MCF 10A (cell line): ENCODE measurements at regions of chr2 and their contacts with region 1.

Region 1: DNA sequence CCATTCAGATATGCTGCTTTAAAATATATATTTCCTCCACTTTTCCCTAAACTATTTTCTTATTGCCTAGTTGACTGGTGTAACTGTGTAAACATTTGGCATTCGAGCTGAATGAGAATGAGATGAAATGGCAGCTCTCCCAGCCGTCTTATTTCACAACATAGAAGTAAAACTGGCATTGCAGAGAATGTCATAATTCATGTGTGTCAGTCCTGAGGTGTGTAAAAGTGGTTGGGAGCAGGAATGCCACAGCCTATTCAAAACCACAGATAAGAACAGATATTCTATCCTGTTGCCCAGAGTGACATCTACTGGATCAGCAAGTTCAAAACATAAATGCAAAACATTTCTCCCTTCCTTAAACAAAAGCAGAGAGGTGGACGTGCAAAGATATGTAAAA is 565.5 kb upstream of the CHAC2 start:
- DNase-seq: peak; percentile 91
- H3K4me3 Mint-ChIP-seq: no peak overlapping the region
- H3K27ac Mint-ChIP-seq: peak overlapping the region; percentile 76
- H3K4me1 Mint-ChIP-seq: peaks cover 15% of the 10 kb centered on the region
- H3K27me3 Mint-ChIP-seq: no peaks in the 10 kb centered on the region
- CTCF ChIP-seq: peak; percentile 55

Region 2: DNA sequence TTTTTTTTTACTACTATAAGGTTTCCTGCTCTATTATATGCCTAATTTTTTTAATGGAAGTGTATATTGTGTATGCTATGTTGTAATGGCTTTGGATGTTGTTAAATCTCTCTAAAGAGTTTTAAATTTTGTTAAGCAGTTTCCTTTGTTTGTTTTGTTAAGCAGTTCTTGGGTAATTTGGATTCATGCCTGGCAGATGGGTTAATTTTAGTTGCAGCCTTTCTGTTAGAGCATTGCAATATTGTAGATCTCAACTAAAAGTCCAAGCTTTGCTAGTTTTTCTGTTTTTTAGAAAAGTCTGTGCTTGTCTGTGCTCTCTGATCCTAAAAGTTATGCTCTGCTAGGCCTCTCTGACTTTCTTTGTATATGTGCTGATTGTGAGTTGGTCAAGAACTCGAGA is 941.2 kb before region 1 on chr2:
- CTCF ChIA-PET with region 1: no interaction called
- POLR2A ChIA-PET with region 1: no interaction called
- intact Hi-C with region 1: no loop called
- DNase-seq: peak; percentile 70
- H3K4me3 Mint-ChIP-seq: no peak overlapping the region
- H3K27ac Mint-ChIP-seq: no peak overlapping the region
- H3K4me1 Mint-ChIP-seq: peaks cover 6% of the 10 kb centered on the region
- H3K27me3 Mint-ChIP-seq: no peaks in the 10 kb centered on the region
- CTCF ChIP-seq: no peak

Region 3: GRCh38 chr2:52810460-52810859 is 391.6 kb before region 1 on chr2:
- CTCF ChIA-PET with region 1: interaction called, 22 read pairs
- POLR2A ChIA-PET with region 1: no interaction called
- intact Hi-C with region 1: loop called (anchors 1 kb)
- DNase-seq: peak; percentile 44
- H3K4me3 Mint-ChIP-seq: no peak overlapping the region
- H3K27ac Mint-ChIP-seq: peak overlapping the region; percentile 59
- H3K4me1 Mint-ChIP-seq: peaks cover 11% of the 10 kb centered on the region
- H3K27me3 Mint-ChIP-seq: no peaks in the 10 kb centered on the region
- CTCF ChIP-seq: peak; percentile 30

Region 4: DNA sequence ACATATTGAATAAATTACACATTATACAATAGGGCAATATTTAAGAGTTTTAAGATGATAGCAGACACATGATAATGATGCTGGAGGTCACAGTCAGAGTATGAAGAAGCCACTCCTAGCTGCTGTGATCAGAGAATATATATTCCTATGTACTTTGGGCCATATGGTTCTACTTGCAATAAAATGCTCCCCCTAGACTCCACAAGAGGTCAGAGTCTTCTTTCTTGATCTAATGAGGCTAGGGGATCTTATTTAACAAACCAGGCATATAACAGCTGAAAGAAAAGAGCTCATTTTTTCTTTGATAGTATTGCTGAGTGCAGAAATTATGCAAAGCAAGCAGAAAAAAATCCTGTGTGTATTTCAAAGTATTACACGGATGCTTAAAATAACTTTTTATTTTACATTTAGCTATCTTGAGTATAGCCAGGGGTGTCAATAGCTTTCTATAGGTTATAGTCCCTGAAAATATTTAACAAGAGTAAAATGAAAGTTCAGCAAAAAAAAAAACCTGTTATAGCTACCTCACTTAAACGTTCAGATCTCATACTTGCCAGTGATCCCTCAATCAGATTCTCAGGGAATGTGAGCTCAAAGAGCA is 183.1 kb before region 1 on chr2:
- CTCF ChIA-PET with region 1: interaction called, 4 read pairs
- POLR2A ChIA-PET with region 1: no interaction called
- intact Hi-C with region 1: loop called (anchors 1 kb)
- DNase-seq: peak; percentile 20
- H3K4me3 Mint-ChIP-seq: no peak overlapping the region
- H3K27ac Mint-ChIP-seq: no peak overlapping the region
- H3K4me1 Mint-ChIP-seq: no peaks in the 10 kb centered on the region
- H3K27me3 Mint-ChIP-seq: no peaks in the 10 kb centered on the region
- CTCF ChIP-seq: peak; percentile 18

Region 5: DNA sequence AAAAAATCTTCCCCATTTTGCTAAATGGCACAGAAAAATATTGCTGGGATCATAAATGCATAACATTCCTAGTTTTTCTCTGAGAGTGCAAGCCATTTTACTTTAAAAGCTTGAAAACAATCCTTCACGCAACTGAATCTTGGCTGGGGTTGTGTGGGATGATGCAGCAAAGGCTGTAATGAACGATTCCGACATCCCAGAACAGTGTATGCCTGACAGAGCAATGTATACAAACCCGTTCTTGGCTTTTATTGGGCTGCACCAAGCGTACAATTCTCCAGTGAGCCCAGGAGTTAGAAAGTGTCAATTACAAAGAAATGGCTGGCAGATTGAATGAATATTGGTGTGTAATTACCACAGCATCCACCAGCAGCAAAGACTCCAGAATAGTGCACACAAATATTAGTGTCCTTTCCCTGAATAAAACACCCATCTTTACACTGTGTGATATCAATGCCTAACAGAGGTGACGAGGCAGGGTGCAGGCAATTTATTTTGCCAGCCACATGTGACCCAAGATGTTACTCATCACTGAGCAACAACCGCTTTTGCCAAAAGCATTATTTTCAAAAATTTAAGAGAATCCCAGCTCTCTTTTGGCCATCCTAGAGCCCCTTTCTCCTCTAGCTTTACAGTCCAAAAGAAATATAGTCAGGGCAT is 13.1 kb before region 1 on chr2:
- CTCF ChIA-PET with region 1: interaction called, 13 read pairs
- POLR2A ChIA-PET with region 1: no interaction called
- intact Hi-C with region 1: no loop called
- DNase-seq: no peak
- H3K4me3 Mint-ChIP-seq: no peak overlapping the region
- H3K27ac Mint-ChIP-seq: no peak overlapping the region
- H3K4me1 Mint-ChIP-seq: no peaks in the 10 kb centered on the region
- H3K27me3 Mint-ChIP-seq: no peaks in the 10 kb centered on the region
- CTCF ChIP-seq: no peak

Region 6: DNA sequence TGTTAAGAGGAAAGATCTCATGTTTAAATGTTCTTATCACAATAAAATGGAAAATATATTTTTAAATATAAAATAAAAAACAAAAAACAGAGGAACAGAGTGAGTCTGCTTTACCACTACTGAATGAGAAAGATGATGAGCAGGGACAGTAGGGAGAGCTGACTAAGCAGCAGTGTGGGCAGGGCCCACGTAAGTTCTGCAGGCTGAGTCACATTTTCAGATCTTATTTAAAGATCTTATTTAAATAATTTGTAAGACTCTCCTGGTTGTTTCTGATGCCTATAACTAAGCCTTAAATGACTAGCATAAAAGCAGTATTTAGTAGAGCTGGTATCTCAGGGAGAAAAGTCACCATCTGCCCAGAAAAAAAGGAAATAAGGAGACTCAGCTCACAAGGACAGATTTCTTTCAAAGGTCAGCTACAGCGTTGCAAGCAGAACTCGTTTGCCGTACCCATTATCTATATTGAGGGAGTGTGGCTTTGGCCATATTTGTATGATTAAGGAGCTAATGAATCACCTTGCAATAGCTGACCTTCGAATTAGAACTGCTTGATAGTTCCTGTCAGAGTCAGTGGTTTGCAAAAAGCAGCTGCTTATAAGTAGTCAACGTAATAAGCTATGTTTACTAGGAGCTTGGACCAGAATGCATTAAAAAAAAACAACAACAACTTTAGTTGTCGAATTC is 243.5 kb after region 1 on chr2:
- CTCF ChIA-PET with region 1: no interaction called
- POLR2A ChIA-PET with region 1: no interaction called
- intact Hi-C with region 1: loop called (anchors 10 kb)
- DNase-seq: peak; percentile 22
- H3K4me3 Mint-ChIP-seq: no peak overlapping the region
- H3K27ac Mint-ChIP-seq: no peak overlapping the region
- H3K4me1 Mint-ChIP-seq: peaks cover 8% of the 10 kb centered on the region
- H3K27me3 Mint-ChIP-seq: no peaks in the 10 kb centered on the region
- CTCF ChIP-seq: no peak

Region 7: DNA sequence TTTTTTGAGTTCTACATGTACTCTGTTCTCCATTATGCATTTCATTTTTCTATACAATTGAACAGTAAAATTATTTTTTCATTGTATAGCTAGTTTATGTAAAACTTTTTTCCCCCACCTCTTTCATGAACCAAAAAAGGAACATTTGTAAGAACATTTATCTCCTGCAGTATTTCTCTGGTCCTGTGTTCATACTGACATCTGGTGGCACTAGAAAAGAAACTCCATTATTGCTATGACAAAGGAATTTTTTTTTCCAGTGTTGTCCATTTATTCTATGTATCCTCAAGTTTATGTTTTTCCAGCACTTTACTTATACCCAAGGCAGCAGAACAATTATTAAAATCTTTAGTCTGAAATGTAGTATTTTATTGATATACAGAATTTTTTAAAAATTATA is 538.1 kb after region 1 on chr2:
- CTCF ChIA-PET with region 1: no interaction called
- POLR2A ChIA-PET with region 1: no interaction called
- intact Hi-C with region 1: loop called (anchors 5 kb)
- DNase-seq: peak; percentile 26
- H3K4me3 Mint-ChIP-seq: no peak overlapping the region
- H3K27ac Mint-ChIP-seq: no peak overlapping the region
- H3K4me1 Mint-ChIP-seq: peaks cover 7% of the 10 kb centered on the region
- H3K27me3 Mint-ChIP-seq: no peaks in the 10 kb centered on the region
- CTCF ChIP-seq: peak; percentile 54